ENCODE measurements at regions of chr2 and their contacts with region 1.

Region 1: DNA sequence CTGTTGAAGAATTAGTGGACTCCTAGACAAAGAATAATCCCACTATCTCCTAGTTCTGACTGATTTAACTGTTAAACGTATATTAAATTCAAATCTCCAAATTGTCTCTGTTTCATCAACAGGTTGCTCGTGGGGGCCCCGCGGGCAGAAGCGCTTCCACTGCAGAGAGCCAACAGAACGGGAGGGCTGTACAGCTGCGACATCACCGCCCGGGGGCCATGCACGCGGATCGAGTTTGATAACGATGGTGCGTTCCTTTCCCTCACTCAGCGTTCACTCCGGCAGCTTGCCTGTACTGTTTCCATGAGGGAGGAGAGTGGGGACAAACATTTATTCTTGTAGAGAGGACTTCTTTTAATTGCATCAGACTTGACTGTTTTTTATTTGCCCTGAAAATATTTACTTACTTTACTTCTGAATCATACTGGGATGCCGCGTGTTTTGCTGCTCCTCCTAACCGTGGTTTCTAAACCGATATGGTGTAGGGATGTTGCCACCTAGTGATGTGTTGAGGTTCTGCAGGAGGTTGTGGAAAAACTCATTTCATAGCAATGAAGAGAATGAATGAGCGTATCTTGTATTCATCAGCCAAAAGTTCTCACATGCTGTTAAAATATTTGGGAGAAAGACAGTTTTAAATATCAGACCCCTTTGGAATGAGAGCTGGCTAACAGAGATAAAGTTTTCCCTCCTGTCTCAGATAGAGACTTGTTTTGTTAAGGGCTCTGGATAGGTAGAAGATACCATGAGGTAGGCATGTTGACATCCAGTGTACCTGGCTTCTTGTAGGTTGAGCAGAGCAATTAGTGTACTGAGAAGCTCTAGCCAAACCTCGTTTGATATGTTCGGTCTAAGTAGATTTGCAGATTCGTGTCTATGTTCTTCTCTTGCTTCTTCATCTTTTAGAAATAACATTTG is 38.3 kb downstream of the ITGA6 start:
- DNase-seq: peak; percentile 78
- H3K4me3 Mint-ChIP-seq: no peak overlapping the region
- H3K27ac Mint-ChIP-seq: peak overlapping the region; percentile 5
- H3K4me1 Mint-ChIP-seq: peaks cover 61% of the 10 kb centered on the region
- H3K27me3 Mint-ChIP-seq: peaks cover 3% of the 10 kb centered on the region

Region 2: GRCh38 chr2:172131713-172132555 is 333.7 kb before region 1 on chr2:
- CTCF ChIA-PET with region 1: interaction called, 37 read pairs
- POLR2A ChIA-PET with region 1: no interaction called
- DNase-seq: no peak
- H3K4me3 Mint-ChIP-seq: no peak overlapping the region
- H3K27ac Mint-ChIP-seq: no peak overlapping the region
- H3K4me1 Mint-ChIP-seq: no peaks in the 10 kb centered on the region
- H3K27me3 Mint-ChIP-seq: peaks cover 12% of the 10 kb centered on the region

Region 3: DNA sequence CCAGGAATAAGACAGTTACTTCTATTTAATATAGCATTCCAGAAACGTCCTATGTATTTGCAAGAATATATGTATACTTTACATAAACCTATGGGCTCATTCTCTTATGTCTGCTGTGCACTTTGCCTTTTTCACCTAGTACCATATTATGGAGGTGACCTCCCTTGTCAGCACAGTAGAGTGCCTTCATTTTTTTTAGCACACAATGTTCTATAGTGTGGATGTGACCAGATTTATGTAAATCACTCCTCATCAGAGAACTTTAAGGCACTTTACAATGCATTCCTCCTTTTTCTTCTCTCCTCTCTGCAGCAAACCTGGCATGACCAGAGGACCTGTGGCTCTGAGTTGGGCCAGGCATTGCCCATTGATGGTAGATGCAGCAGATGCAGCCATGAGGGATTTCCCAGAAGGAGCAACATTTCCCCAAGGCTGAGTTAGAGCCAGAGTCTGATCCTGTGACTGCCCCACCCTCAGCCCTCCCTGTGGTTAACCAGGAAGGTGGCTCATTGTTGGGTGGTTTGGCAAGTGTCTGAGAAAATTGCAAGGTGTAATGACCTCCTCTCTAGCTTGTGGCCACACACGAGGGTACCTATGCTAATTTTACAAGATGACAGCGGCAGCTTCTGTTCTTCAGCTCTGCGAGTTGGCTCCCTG is 286.5 kb before region 1 on chr2:
- CTCF ChIA-PET with region 1: interaction called, 97 read pairs
- POLR2A ChIA-PET with region 1: interaction called, 3 read pairs
- DNase-seq: peak; percentile 28
- H3K4me3 Mint-ChIP-seq: no peak overlapping the region
- H3K27ac Mint-ChIP-seq: peak overlapping the region; percentile 29
- H3K4me1 Mint-ChIP-seq: peaks cover 27% of the 10 kb centered on the region
- H3K27me3 Mint-ChIP-seq: peaks cover 3% of the 10 kb centered on the region

Region 4: DNA sequence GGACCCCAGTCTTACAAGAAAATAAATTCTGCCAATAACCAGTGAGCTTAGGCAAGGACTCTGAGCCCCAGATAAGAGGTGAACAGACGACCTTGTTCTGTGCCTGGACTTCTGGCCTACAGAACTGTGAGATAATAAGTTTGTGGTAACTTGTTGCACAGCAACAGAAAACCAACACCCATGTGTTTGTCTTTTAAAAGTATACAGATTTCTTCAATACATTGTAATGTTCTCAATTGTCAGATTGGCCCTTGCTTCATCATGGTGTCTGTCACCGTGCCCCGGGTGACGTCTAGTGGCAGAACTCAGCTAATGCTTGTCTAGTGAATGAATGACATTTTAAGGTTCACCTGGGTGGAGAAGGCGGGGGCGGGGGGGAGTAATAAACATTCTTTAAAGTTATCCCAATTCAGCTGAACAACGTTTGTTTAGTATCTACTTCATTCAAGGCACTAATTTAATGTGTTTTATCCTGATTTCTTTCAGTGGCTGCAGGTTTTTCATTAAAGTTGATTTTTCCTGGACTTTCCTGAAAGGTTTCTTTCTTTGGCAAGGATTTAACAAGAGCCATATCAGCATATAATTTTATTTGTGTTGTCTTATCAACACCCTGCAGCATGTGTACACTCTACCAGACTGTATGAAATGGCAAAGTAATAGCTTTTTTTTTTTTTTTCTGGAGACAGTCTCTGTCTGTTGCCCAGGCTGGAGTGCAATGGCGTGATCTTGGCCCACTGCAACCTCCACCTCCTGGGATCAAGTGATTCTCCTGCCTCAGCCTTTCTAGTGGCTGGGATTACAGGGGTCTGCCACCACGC is 239.2 kb before region 1 on chr2:
- CTCF ChIA-PET with region 1: interaction called, 15 read pairs
- POLR2A ChIA-PET with region 1: no interaction called
- DNase-seq: peak; percentile 45
- H3K4me3 Mint-ChIP-seq: no peak overlapping the region
- H3K27ac Mint-ChIP-seq: no peak overlapping the region
- H3K4me1 Mint-ChIP-seq: peaks cover 52% of the 10 kb centered on the region
- H3K27me3 Mint-ChIP-seq: peaks cover 4% of the 10 kb centered on the region

Region 5: DNA sequence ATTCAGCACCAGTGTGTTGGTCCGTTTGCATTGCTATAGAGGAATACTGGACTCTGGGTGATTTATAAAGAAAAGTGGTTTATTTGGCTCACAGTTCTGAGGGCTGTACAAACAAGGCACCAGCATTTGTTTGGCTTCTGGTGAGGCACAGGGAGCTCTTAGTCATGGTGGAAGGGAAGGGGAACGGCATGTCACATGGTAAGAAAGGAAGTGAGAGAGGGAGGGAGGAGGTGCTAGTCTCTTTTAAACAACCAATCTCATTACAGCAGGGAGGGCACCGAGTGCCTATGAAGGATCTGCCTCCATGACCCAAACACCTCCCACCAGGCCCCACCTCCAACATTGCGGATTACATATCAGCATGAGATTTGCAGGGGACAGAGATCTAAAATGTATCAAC is 219.0 kb before region 1 on chr2:
- CTCF ChIA-PET with region 1: no interaction called
- POLR2A ChIA-PET with region 1: no interaction called
- DNase-seq: no peak
- H3K4me3 Mint-ChIP-seq: no peak overlapping the region
- H3K27ac Mint-ChIP-seq: no peak overlapping the region
- H3K4me1 Mint-ChIP-seq: peaks cover 24% of the 10 kb centered on the region
- H3K27me3 Mint-ChIP-seq: peaks cover 10% of the 10 kb centered on the region

Region 6: GRCh38 chr2:172442072-172442895 is 23.4 kb before region 1 on chr2:
- CTCF ChIA-PET with region 1: interaction called, 120 read pairs
- POLR2A ChIA-PET with region 1: interaction called, 31 read pairs
- DNase-seq: peak; percentile 37
- H3K4me3 Mint-ChIP-seq: no peak overlapping the region
- H3K27ac Mint-ChIP-seq: peak overlapping the region; percentile 27
- H3K4me1 Mint-ChIP-seq: peaks cover 29% of the 10 kb centered on the region
- H3K27me3 Mint-ChIP-seq: peaks cover 11% of the 10 kb centered on the region

Region 7: GRCh38 chr2:172484253-172484652 is 18.6 kb after region 1 on chr2:
- CTCF ChIA-PET with region 1: interaction called, 29 read pairs
- POLR2A ChIA-PET with region 1: interaction called, 3 read pairs
- DNase-seq: no peak
- H3K4me3 Mint-ChIP-seq: no peak overlapping the region
- H3K27ac Mint-ChIP-seq: no peak overlapping the region
- H3K4me1 Mint-ChIP-seq: peaks cover 20% of the 10 kb centered on the region
- H3K27me3 Mint-ChIP-seq: no peaks in the 10 kb centered on the region

Region 8: DNA sequence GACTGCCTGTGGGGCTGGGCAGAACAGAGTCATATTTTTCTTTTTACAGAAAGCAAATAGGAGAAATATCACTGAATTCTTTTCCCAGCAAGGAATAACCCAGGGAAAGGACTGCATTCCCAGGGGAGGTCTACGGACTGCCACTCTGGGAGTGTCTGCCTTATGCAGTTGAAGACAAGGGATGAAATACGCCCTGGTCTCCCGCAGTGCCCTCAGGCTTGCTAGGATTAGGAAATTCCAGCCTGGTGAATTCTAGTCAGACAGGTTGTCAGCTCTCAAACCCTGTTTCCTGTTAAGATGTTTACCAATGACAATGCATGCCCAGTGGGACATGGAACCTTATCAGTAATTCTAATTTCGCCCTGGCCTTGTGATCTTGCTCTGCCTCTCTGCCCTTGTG is 59.9 kb after region 1 on chr2:
- CTCF ChIA-PET with region 1: no interaction called
- POLR2A ChIA-PET with region 1: no interaction called
- DNase-seq: no peak
- H3K4me3 Mint-ChIP-seq: no peak overlapping the region
- H3K27ac Mint-ChIP-seq: no peak overlapping the region
- H3K4me1 Mint-ChIP-seq: no peaks in the 10 kb centered on the region
- H3K27me3 Mint-ChIP-seq: no peaks in the 10 kb centered on the region

Region 9: GRCh38 chr2:172545408-172546084 is 79.9 kb after region 1 on chr2:
- CTCF ChIA-PET with region 1: no interaction called
- POLR2A ChIA-PET with region 1: no interaction called
- DNase-seq: no peak
- H3K4me3 Mint-ChIP-seq: no peak overlapping the region
- H3K27ac Mint-ChIP-seq: no peak overlapping the region
- H3K4me1 Mint-ChIP-seq: peaks cover 13% of the 10 kb centered on the region
- H3K27me3 Mint-ChIP-seq: no peaks in the 10 kb centered on the region

Measured in activated CD4-positive, alpha-beta memory T cell treated with anti-CD3 and anti-CD28 coated beads, Interleukin-2, amount 10 ng/mL, durations not matched to agents 7 days and 5 days (primary cell).